ENCODE measurements at regions of chr7 and their contacts with region 1.

Region 1: GRCh38 chr7:149409895-149410294 is 51.0 kb downstream of the ZNF777 start:
- DNase-seq: no peak
- H3K4me3 ChIP-seq: no peak overlapping the region
- H3K27ac ChIP-seq: no peak overlapping the region
- H3K4me1 ChIP-seq: 0 out of 2 replicates have a peak, but pooled peaks cover 5% of the 10 kb centered on the region
- H3K27me3 ChIP-seq: no peaks in the 10 kb centered on the region
- CTCF ChIP-seq: no peak

Region 2: DNA sequence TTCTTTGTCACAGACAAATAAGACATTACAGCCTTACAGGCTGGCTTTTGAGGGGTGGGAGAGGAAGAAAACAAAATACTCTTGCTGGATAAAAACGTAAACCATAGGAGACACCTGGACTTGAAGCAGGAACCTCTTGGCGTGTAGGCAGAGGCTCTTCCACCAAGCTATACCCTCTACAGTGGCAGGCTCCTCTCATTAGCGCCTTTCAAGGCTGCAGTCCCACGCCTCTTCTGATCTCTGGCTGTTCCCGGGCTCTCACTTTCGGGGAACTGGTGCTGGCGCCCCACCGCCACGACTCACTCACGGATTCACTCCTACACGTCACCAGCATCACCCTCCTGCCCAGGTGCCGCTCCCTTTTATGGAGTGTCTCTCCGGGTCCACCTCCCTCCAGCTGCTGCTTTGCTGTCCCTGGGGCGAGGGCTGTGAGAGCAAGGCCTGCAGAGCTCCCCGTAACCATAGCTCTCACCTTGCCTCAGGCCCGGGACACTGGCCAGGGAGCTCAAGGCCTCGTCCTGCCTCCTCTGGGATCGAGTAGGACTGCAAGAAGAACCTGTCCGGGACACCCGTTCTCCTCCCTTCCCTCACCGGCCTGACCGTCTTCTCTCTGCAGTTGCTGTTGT is 11.6 kb before region 1 on chr7:
- CTCF ChIA-PET with region 1: no interaction called
- POLR2A ChIA-PET with region 1: interaction called, 22 read pairs
- intact Hi-C with region 1: no loop called
- DNase-seq: no peak
- H3K4me3 ChIP-seq: no peak overlapping the region
- H3K27ac ChIP-seq: no peak overlapping the region
- H3K4me1 ChIP-seq: no peaks in the 10 kb centered on the region
- H3K27me3 ChIP-seq: no peaks in the 10 kb centered on the region
- CTCF ChIP-seq: no peak